ENCODE measurements at regions of chr17 and their contacts with region 1.

Region 1: GRCh38 chr17:58200017-58200633 is 7.6 kb downstream of the EPX start:
- DNase-seq: no peak
- ATAC-seq: no peak
- H3K4me3 ChIP-seq: no peak overlapping the region
- H3K27ac ChIP-seq: no peak overlapping the region
- H3K4me1 ChIP-seq: no peaks in the 10 kb centered on the region
- H3K27me3 ChIP-seq: peaks cover 0 to 10% (median 0%) of the 10 kb centered on the region in 3 donors
- CTCF ChIP-seq: peak in 1 of 5 experiments; percentile 44
- POLR2A ChIP-seq: no peak

Region 2: DNA sequence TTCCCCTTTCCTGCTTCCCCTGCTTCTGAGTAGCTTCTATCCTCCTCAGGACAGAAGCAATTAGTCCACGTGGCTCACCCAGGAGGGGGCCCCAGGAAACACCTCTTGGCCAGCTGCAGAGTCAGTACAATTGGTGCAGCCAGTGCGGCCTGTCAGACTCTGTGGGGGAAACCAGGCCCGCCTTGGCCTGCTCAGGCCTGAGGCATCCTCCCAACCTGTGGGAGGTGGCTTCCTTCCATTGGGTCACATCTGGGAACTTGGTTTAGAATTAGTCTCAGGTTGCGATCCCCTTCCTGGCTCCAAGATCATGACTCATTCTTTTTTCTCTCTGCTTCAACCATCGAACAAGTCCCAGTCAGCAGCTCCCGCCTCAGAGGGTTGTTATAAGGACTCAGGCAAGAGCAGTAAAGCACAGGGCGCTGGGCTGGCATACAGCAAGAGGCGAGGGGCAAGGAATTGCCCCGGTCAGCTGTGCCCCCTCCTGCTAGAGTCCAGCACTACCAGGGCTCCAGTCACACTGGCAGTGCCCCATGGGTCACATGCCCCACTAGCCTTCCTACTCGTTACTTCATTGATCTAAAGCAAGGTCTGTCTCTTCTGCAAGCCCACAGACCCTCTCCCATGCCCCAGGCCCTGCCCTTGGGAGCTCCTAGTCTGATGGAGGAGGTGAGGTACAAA is 15.7 kb before region 1 on chr17:
- in situ Hi-C with region 1: no loop called
- intact Hi-C with region 1: no loop called
- DNase-seq: no peak
- ATAC-seq: no peak
- H3K4me3 ChIP-seq: no peak overlapping the region
- H3K27ac ChIP-seq: no peak overlapping the region
- H3K4me1 ChIP-seq: no peaks in the 10 kb centered on the region
- H3K27me3 ChIP-seq: peaks cover 0 to 5% (median 0%) of the 10 kb centered on the region in 3 donors
- CTCF ChIP-seq: no peak
- POLR2A ChIP-seq: no peak

Region 3: GRCh38 chr17:58267347-58268324 is 67.5 kb after region 1 on chr17:
- in situ Hi-C with region 1: loop called in 1 of 4 experiments (anchors 10 kb)
- intact Hi-C with region 1: no loop called
- DNase-seq: no peak
- ATAC-seq: no peak
- H3K4me3 ChIP-seq: no peak overlapping the region
- H3K27ac ChIP-seq: no peak overlapping the region
- H3K4me1 ChIP-seq: no peaks in the 10 kb centered on the region
- H3K27me3 ChIP-seq: peaks cover 5 to 13% (median 9%) of the 10 kb centered on the region in 3 donors
- CTCF ChIP-seq: no peak
- POLR2A ChIP-seq: no peak